Psoas muscle (tissue), 8 donors: ENCODE measurements at regions of chr9 and their contacts with region 1.

Region 1: DNA sequence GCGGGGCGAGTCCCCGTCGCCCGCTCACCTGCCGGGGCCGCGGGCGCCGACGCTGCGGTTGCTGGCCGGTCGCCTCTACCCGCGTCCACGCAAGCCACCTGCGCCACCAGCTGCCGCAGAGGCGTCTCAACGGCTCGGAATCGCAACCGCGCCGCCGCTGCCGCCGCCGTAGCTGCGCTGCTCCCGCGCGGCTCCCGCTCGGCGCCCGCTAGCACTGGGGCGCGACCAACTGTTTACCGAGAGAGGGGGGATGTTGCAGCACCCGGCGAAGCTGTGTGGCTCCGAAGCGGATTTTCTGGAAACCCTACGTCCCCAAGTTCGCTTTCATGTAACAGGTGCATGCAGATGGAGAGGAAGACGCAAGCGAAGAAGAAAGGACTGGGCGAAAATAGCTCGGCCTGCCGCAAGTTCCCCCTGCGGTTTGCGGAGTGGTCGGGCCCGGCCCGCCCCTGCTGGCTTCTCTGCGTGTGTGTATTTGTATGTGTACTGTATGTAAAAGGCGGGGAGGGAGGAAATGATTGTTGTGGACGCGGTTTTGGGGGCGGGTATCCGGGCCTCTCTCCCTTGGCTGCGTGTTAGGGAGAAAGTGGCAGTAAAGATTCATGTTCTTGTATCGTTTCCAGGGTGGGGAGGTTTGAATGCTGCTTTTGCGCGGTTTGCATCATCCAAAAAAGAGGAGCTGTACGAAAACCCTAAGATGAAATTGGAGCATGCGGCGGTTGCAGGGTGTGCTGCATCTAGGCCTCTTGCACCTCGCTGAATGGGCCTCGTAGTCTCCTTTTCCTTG is at the start of gene PSIP1:
- DNase-seq: peak; percentile 80 to 88
- ATAC-seq: peak; percentile 89 to 95 (median 94)
- H3K4me3 ChIP-seq: peak within 1 kb of the TSS; percentile 98
- H3K27ac ChIP-seq: peak within 1 kb of the TSS; percentile 93
- H3K4me1 ChIP-seq: peaks cover 9% of the 10 kb centered on the region
- H3K27me3 ChIP-seq: no peaks in the 10 kb centered on the region
- CTCF ChIP-seq: no peak
- total RNA-seq, gene PSIP1: 13.0 to 19.2 (median 18.2) TPM

Region 2: DNA sequence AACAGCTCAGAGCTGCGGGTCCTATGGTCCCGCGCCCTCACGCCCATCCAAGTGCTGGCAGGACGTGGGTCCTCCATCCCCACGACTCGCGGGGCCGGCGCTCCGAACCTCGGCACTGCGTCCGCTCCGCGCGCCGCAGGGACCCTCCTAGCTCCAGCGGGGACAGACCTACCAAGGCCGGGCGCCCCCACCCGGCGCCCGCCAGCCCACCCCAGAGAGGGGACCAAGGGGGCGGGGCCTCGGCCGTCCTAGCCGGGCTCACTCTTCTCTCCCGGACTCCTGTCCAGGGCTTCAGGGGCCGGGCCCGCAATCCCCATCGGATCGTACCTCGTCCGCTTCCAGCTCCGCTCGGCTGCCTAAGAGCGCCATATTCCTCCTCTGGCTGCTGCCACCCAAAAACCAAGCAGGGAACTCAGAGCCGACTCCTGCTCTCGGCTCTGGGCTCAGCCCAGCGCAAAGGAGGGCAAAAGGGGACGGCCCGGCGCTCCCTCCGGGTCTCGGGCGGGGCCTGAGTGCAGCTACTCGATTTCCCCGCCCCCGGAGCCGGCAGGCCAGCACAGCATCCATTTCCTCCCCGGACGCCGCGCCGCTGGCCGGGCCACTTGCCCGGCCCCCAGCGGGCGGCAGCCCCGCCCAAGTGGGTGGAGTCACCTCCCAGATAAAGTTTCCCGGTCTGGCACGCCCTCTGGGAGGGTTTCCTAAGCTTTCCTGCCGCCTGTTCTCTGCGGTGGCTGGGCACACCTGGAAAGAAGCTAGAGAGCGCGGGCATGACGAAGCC is 204.0 kb before region 1 on chr9 and contains the start of gene TTC39B:
- intact Hi-C with region 1: loop called in 1 of 2 experiments (anchors 10 kb)
- DNase-seq: peak; percentile 94 to 96
- ATAC-seq: peak; percentile 93 to 98 (median 97)
- H3K4me3 ChIP-seq: peak within 1 kb of the TSS; percentile 81
- H3K27ac ChIP-seq: peak within 1 kb of the TSS; percentile 74
- H3K4me1 ChIP-seq: peaks cover 7% of the 10 kb centered on the region
- H3K27me3 ChIP-seq: no peaks in the 10 kb centered on the region
- CTCF ChIP-seq: no peak
- total RNA-seq, gene TTC39B: 1.8 to 13.1 (median 3.1) TPM

Region 3: DNA sequence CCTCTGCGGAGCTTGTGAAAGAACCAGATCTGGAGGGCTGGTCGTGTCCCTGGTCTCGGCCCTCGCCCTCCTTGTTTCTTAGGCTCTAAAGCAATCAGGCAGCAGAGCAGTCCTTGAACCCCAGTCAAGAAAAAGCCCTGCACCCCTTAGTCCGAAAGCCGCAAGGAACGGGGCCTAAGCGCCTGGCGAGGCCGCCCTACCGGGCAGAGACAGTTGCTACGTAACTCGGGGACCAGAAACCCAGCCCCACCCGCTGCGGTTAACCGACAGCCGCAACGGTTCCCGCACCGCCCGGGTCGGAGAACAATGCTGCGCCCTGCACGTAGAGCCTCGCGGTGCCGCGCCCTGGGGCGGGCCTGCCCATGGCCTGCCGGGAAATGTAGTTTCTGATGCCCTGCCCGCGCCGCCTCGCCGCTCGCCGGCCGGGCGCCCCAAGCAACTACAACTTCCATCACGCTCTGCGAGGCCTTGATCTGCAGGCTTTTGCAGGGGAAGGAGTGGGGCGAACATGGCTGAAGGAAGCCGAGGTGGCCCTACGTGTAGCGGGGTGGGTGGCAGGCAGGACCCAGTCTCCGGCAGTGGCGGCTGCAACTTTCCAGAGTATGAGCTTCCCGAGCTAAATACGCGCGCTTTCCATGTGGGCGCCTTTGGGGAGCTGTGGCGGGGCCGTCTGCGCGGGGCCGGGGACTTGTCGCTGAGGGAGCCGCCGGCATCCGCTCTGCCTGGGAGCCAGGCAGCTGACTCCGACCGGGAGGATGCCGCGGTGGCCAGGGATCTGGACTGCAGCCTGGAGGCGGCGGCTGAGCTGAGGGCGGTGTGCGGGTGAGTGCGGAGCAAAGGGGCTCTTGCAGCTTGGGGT is 88.4 kb before region 1 on chr9 and contains the start of gene SNAPC3:
- intact Hi-C with region 1: loop called in 1 of 2 experiments (anchors 10 kb)
- DNase-seq: peak; percentile 94 to 97
- ATAC-seq: peak; percentile 99
- H3K4me3 ChIP-seq: peak within 1 kb of the TSS; percentile 98
- H3K27ac ChIP-seq: peak within 1 kb of the TSS; percentile 92
- H3K4me1 ChIP-seq: peaks cover 24% of the 10 kb centered on the region
- H3K27me3 ChIP-seq: no peaks in the 10 kb centered on the region
- CTCF ChIP-seq: no peak
- total RNA-seq, gene SNAPC3: 19.9 to 29.2 (median 20.8) TPM

Region 4: GRCh38 chr9:15552636-15553527 is 41.9 kb after region 1 on chr9 and contains the start of gene CCDC171:
- intact Hi-C with region 1: loop called in 1 of 2 experiments (anchors 2 kb)
- DNase-seq: peak; percentile 91 to 96
- ATAC-seq: peak; percentile 96 to 99 (median 98)
- H3K4me3 ChIP-seq: peak within 1 kb of the TSS; percentile 79
- H3K27ac ChIP-seq: peak within 1 kb of the TSS; percentile 71
- H3K4me1 ChIP-seq: no peaks in the 10 kb centered on the region
- H3K27me3 ChIP-seq: no peaks in the 10 kb centered on the region
- CTCF ChIP-seq: no peak
- total RNA-seq, gene CCDC171: 0.44 to 1.6 (median 0.74) TPM

Region 5: DNA sequence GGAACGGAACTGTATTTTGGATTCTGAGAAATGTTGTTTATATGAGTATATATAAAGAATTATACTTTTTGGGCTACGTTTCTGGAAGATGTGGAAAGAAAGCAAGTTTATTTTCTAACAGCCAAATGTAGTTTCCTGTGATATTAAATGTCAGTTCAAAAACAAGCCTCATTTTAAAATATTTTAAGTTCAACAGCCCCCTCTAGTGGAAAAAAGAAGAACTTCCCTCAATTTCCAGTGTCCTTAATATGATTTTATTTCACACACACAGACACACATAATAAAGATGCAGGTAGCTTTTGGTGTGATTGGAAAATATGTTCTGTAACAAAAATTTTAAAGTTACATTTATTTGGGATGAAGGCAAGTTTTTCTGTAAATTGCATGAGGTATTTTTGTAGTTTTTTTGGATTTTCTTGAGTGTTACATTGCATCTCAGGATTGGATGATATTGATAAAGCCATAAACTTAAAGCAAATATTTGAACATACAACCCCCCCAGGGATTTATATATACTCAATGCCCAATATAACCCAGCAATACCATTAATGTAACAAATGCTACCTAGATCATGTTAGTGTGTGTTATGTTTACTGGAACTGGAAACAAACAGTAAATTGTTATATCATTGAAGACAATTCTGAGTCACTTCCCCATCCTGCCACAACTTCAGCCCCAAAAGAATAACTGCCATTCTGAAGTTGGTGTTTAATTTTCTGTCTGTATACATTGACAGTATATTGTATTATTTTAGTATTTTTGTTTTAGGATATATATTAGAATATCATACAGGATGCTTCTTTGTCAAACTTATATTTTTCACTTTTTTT is 95.9 kb after region 1 on chr9:
- intact Hi-C with region 1: loop called in 1 of 2 experiments (anchors 10 kb)
- DNase-seq: no peak
- ATAC-seq: peak in 2 of 4 donors; percentile 40 to 70
- H3K4me3 ChIP-seq: no peak overlapping the region
- H3K27ac ChIP-seq: no peak overlapping the region
- H3K4me1 ChIP-seq: no peaks in the 10 kb centered on the region
- H3K27me3 ChIP-seq: no peaks in the 10 kb centered on the region
- CTCF ChIP-seq: peak; percentile 83